ENCODE measurements at regions of chr9 and their contacts with region 1.

Region 1: GRCh38 chr9:6681147-6681956 is 35.8 kb upstream of the GLDC start:
- DNase-seq: peak; percentile 89 to 97
- ATAC-seq: peak; percentile 93 to 94
- H3K4me3 ChIP-seq: peak overlapping the region; percentile 68 to 82 (median 70)
- H3K27ac ChIP-seq: peak overlapping the region; percentile 91 to 98 (median 94)
- H3K4me1 ChIP-seq: no peaks in the 10 kb centered on the region
- H3K27me3 ChIP-seq: no peaks in the 10 kb centered on the region
- CTCF ChIP-seq: peak in 2 of 5 experiments; percentile 43 to 50
- POLR2A ChIP-seq: peak; percentile 63 to 76

Region 2: GRCh38 chr9:6008169-6008979 is 673.0 kb before region 1 on chr9:
- in situ Hi-C with region 1: loop called in 1 of 4 experiments (anchors 25 kb)
- intact Hi-C with region 1: loop called (anchors 5 kb)
- DNase-seq: peak; percentile 97 to 98
- ATAC-seq: peak; percentile 92 to 94
- H3K4me3 ChIP-seq: peak overlapping the region; percentile 81 to 96 (median 94)
- H3K27ac ChIP-seq: peak overlapping the region; percentile 96 to 99 (median 99)
- H3K4me1 ChIP-seq: peaks cover 56 to 71% of the 10 kb centered on the region in 2 donors
- H3K27me3 ChIP-seq: no peaks in the 10 kb centered on the region
- CTCF ChIP-seq: no peak
- POLR2A ChIP-seq: peak; percentile 62 to 69

Region 3: DNA sequence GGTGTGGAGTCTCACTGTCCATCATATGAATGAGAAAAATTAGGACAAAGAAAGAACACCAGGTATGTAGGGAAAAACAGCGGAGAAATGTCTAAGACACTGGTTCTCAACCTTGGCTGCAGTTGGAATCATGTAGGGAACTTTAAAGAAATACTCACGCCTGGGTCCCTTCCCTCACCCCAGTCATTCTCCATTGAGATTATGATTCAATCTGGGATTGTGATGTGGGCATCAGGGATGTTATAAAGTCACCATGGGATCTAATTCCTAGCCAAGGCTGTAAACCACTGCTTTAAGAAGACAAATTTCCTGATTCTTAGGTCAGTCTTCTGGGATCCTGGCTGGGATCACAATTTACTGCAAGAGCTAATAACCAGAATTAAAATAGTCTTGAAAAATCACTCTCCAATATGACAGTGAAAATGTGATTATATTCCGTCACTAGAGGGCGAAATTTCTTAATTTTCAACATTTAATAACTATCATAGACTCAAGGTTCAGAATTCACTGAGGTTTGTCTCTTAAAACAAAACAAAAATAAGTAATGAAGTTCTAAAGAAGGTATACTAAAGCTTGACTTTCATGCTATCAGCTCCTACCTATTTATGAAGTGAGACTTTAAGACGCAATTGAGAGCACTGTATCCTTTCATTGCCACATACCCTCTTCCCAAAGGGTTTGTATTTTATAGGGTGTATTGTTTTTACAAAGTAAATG is 96.3 kb before region 1 on chr9:
- in situ Hi-C with region 1: loop called in 3 of 4 experiments (anchors 5 to 10 kb)
- intact Hi-C with region 1: no loop called
- DNase-seq: no peak
- ATAC-seq: no peak
- H3K4me3 ChIP-seq: no peak overlapping the region
- H3K27ac ChIP-seq: no peak overlapping the region
- H3K4me1 ChIP-seq: no peaks in the 10 kb centered on the region
- H3K27me3 ChIP-seq: no peaks in the 10 kb centered on the region
- CTCF ChIP-seq: peak in 3 of 5 experiments; percentile 24 to 54 (median 44)
- POLR2A ChIP-seq: no peak

Region 4: GRCh38 chr9:6703898-6704639 is 22.7 kb after region 1 on chr9:
- in situ Hi-C with region 1: no loop called
- intact Hi-C with region 1: loop called (anchors 1 kb)
- DNase-seq: peak; percentile 51 to 82
- ATAC-seq: peak; percentile 93 to 97
- H3K4me3 ChIP-seq: peak overlapping the region; percentile 57 to 70 (median 64)
- H3K27ac ChIP-seq: peak overlapping the region; percentile 79 to 89 (median 80)
- H3K4me1 ChIP-seq: peaks cover 0 to 4% of the 10 kb centered on the region in 2 donors
- H3K27me3 ChIP-seq: no peaks in the 10 kb centered on the region
- CTCF ChIP-seq: no peak
- POLR2A ChIP-seq: peak; percentile 59 to 67

Region 5: DNA sequence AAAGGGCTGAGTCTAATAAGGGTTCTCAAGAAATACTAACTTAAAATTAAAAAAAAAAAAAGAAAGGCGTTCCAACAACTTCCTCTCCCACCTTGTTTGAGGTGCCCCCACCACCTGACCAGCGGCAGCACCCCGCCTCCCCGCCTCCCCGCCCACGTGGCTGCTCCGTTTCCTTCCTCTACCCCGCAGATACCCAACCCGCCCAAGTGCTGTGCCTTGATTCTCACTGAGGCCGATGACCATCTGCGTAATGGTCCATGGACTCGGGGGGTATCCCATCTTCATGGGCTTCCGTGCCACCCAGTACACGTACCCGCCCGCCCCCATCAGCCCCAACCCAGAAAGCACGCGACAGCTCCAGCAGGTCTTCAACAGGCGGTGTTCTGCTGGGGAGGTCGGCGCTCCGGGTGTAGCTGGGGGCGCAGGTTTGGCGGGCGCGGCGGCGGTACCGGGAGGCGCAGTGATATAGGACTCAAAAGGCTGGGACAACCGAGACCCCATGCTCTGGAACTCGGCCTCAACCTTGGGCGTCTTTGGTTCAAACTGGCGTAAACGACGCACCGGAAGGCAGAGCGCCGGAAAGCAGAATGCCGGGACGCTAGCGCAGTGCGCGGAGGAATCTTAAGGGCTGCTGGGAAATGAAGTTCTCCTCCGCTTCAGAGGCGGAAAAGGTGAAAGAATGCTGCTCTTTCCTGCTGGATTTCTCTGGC is 1118.0 kb after region 1 on chr9 and contains the start of gene DMAC1:
- in situ Hi-C with region 1: no loop called
- intact Hi-C with region 1: loop called (anchors 10 kb)
- DNase-seq: peak; percentile 57 to 66
- ATAC-seq: peak; percentile 96 to 98
- H3K4me3 ChIP-seq: peak within 1 kb of the TSS; percentile 83 to 97 (median 90)
- H3K27ac ChIP-seq: peak within 1 kb of the TSS; percentile 92 to 96 (median 94)
- H3K4me1 ChIP-seq: peaks cover 14% of the 10 kb centered on the region in 2 donors
- H3K27me3 ChIP-seq: no peaks in the 10 kb centered on the region
- CTCF ChIP-seq: no peak
- POLR2A ChIP-seq: peak in 1 of 2 donors; percentile 40
- total RNA-seq, gene DMAC1: 15.6 to 23.4 (median 21.2) TPM